ENCODE measurements at regions of chr22 and their contacts with region 1.

Region 1: DNA sequence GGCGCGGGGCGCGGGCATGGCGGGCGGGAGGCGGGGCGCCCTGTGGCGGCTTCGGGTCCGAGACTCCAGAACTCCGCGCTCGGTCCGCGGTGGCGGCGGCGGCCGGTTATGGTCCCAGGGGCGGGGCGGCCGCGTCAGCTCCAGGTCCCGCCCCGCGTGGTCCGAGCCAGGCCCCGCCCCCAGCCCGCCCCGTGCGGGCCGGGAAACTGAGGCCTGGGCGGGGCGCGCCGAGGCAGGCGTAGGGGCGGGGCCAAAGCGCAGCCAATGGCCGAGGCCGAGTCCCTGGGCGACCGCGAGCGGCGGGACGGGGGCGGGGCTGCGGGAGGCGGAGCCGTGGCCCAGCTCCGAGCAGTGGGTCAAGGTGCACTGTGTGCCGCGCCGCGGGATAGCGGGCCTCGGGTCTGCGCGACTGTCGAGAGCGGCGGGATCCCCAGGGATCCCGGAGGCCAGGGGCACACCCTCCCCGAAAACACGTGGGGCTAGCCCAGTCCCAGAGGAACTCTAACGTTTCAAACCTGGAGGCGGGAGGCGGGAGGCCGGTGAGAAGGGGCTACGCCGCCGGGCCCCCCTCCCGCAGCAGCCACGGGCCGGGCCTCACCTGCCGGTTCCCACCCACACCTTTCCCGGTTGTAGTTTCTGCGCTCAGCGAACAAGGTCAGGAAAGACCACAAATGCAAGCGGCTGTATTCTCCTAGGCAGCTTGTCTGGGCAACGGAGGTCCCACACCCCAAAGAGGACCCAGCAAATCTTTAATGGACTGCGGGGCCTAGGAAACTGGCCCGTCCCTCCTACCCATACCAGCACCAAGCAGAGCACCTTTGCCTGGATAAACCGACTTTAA is at the start of gene SLC25A1:
- DNase-seq: peak; percentile 81

Region 2: GRCh38 chr22:18888115-18888514 is 290.8 kb before region 1 on chr22:
- in situ Hi-C with region 1: no loop called
- DNase-seq: no peak

Region 3: GRCh38 chr22:19085233-19085718 is 93.6 kb before region 1 on chr22:
- in situ Hi-C with region 1: loop called (anchors 25 kb)
- DNase-seq: peak; percentile 37

Measured in KBM-7 (cell line).